Right lobe of liver (tissue), 6 donors: ENCODE measurements at regions of chr12 and their contacts with region 1.

Region 1: GRCh38 chr12:25121916-25122315 is 73.0 kb downstream of the DNAI7 start:
- DNase-seq: no peak
- ATAC-seq: no peak
- H3K4me3 ChIP-seq: no peak overlapping the region
- H3K27ac ChIP-seq: no peak overlapping the region
- H3K4me1 ChIP-seq: no peaks in the 10 kb centered on the region
- H3K27me3 ChIP-seq: no peaks in the 10 kb centered on the region
- CTCF ChIP-seq: no peak
- POLR2A ChIP-seq: no peak

Region 2: GRCh38 chr12:24979976-24980725 is 141.8 kb before region 1 on chr12:
- intact Hi-C with region 1: loop called in 1 of 2 experiments (anchors 10 kb)
- DNase-seq: no peak
- ATAC-seq: no peak
- H3K4me3 ChIP-seq: no peak overlapping the region
- H3K27ac ChIP-seq: no peak overlapping the region
- H3K4me1 ChIP-seq: no peaks in the 10 kb centered on the region
- H3K27me3 ChIP-seq: no peaks in the 10 kb centered on the region
- CTCF ChIP-seq: no peak
- POLR2A ChIP-seq: no peak

Region 3: DNA sequence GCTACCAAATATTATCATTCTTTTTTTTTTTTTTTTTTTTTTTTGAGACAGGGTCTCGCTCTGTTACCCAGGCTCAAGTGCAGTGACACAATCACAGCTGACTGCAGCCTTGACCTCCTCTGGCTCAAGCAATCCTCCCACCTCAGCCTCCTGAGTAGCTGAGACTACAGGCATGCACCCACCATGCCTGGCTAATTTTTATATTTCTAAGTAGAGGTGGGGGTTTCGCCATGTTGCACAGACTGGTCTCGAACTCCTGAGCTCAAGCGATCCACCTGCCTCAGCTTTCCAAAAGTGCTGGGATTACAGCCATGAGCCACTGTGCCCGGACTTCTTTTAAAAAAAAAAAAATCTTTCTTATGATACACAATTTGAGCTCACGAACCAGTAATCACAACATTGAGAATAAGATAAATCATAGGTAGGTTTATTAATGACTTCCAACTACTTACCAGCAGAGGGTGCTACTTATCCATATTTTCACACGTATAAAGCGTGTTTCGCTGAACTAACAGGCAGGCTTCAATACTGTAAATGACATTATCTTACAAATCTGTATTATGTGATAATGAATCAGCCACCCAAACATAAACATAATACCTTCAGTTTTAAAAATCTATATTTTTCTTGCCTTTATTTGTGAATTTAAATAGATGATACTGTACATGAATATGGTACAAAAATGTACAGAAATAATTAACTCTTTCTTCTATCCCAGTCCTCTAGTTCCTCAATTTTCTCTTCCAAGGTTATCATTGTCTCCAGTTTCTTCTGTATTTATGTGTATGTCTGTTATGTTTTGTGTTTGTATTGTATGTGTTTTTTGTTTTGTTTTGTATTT is 130.5 kb before region 1 on chr12:
- intact Hi-C with region 1: loop called (anchors 10 kb)
- DNase-seq: no peak
- ATAC-seq: peak; percentile 89 to 95 (median 94)
- H3K4me3 ChIP-seq: no peak overlapping the region
- H3K27ac ChIP-seq: no peak overlapping the region
- H3K4me1 ChIP-seq: no peaks in the 10 kb centered on the region
- H3K27me3 ChIP-seq: no peaks in the 10 kb centered on the region
- CTCF ChIP-seq: peak; percentile 56 to 84 (median 64)
- POLR2A ChIP-seq: no peak

Region 4: DNA sequence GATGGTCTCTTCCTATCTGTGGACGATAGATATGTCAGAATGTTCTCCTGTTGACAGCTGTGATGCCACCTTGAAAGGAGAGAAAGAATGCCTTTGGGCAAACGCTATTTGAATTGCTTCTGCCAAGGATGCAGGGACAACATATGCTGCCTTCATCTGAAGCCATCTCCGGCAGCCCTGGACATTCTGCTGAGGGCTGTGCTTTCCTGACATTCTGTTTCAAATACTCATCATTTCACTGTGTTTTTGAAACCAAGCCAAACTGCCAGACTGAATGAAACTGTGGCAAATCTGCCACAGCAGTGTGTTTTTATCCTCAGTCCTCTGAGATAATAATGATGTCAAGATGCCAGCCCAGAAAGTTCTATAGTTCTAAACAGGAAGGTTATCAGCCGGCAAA is 87.2 kb before region 1 on chr12:
- intact Hi-C with region 1: no loop called
- DNase-seq: no peak
- ATAC-seq: peak in 1 of 4 donors; percentile 20
- H3K4me3 ChIP-seq: no peak overlapping the region
- H3K27ac ChIP-seq: no peak overlapping the region
- H3K4me1 ChIP-seq: no peaks in the 10 kb centered on the region
- H3K27me3 ChIP-seq: peaks cover 0 to 4% of the 10 kb centered on the region in 2 donors
- CTCF ChIP-seq: no peak
- POLR2A ChIP-seq: no peak

Region 5: DNA sequence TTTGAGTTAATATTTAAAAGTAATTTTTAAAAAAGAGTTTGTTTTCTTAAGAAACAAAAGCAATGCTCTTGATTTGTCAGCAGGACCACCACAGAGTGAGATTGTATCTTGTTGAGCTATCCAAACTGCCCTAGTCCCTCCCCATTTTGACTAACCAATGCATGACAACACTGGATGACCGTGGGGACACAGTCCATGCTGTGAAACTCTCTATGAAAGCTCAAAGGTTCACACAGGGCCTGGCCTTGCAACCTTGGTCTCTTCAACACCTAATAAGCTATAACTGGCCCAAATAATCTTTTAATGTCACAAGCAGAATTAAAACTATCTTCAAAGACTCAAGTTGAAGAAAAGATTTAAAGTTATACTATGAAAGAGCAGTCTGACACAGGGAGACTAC is 86.6 kb after region 1 on chr12:
- intact Hi-C with region 1: no loop called
- DNase-seq: peak; percentile 39 to 80 (median 74)
- ATAC-seq: peak; percentile 94 to 99 (median 97)
- H3K4me3 ChIP-seq: no peak overlapping the region
- H3K27ac ChIP-seq: peak overlapping the region; percentile 24 to 69 (median 41)
- H3K4me1 ChIP-seq: peaks cover 0 to 41% (median 6%) of the 10 kb centered on the region in 4 donors
- H3K27me3 ChIP-seq: no peaks in the 10 kb centered on the region
- CTCF ChIP-seq: no peak
- POLR2A ChIP-seq: no peak